CD4-positive, alpha-beta memory T cell (primary cell): ENCODE measurements at regions of chr1 and their contacts with region 1.

Region 1: DNA sequence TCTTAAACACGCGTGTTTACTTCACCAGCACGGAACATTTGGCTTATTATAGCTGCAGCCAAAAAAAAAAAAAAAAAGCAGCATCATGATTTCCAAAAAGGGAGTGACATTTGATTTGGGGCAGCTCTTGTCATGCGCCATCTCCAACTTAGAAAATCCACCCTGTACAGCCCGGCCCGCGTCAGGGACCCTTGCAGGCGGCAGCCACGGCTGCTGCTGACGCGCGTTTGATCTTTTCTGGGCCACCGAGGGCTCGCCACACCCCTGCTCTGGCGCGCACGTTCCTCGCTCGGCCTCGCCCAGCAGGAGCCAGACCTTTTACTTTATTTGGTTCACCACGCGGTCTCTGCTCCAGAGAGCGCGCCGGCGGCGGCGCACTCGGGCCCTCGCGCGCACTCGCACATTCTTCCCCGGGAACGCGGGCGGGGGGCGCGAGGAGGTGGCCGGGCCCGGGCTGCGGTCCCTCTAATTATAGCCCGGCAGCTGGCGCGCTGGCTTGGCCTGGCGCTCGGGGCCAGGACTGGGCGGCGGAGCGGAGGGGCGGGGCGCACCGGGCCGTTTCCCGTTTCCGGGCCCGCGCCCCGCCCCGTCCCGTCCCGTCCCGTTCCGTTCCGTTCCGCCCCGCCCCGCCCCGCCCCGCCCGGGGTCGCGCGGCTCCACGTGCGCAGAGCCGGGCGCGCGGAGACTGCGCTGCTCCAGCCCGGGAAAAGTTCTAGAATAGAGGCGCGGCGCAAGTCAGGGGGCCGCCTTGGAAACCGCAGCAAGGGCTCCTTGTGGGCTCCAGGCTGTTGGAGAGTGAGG is 10.2 kb downstream of the IRF2BP2 start:
- DNase-seq: peak; percentile 81 to 95 (median 84)
- H3K4me3 ChIP-seq: peak overlapping the region; percentile 17 to 46
- H3K4me3 Mint-ChIP-seq: peak overlapping the region; percentile 84 to 95 (median 88)
- H3K27ac ChIP-seq: peak overlapping the region; percentile 96
- H3K27ac Mint-ChIP-seq: peak overlapping the region; percentile 92 to 99 (median 97)
- H3K4me1 ChIP-seq: peaks cover 56% of the 10 kb centered on the region
- H3K4me1 Mint-ChIP-seq: peaks cover 37 to 64% (median 48%) of the 10 kb centered on the region in 4 donors
- H3K27me3 ChIP-seq: no peaks in the 10 kb centered on the region
- H3K27me3 Mint-ChIP-seq: no peaks in the 10 kb centered on the region

Region 2: GRCh38 chr1:234478481-234479309 is 121.1 kb before region 1 on chr1 and contains the start of gene TARBP1:
- CTCF ChIA-PET with region 1: no interaction called
- POLR2A ChIA-PET with region 1: interaction called, 9 read pairs
- intact Hi-C with region 1: loop called (anchors 2 kb)
- DNase-seq: peak; percentile 73 to 83 (median 82)
- H3K4me3 ChIP-seq: peak within 1 kb of the TSS; percentile 47 to 63
- H3K4me3 Mint-ChIP-seq: peak within 1 kb of the TSS; percentile 87 to 93 (median 90)
- H3K27ac ChIP-seq: peak within 1 kb of the TSS; percentile 42
- H3K27ac Mint-ChIP-seq: peak within 1 kb of the TSS; percentile 57 to 96 (median 89)
- H3K4me1 ChIP-seq: peaks cover 29% of the 10 kb centered on the region
- H3K4me1 Mint-ChIP-seq: peaks cover 15 to 44% (median 27%) of the 10 kb centered on the region in 4 donors
- H3K27me3 ChIP-seq: no peaks in the 10 kb centered on the region
- H3K27me3 Mint-ChIP-seq: peaks cover 5 to 9% of the 10 kb centered on the region in 2 donors
- total RNA-seq, gene TARBP1: 25.8 to 27.5 TPM

Region 3: GRCh38 chr1:234691567-234691966 is 91.8 kb after region 1 on chr1:
- CTCF ChIA-PET with region 1: interaction called, 4 read pairs
- POLR2A ChIA-PET with region 1: no interaction called
- intact Hi-C with region 1: loop called (anchors 1 kb)
- DNase-seq: peak in 4 of 5 donors; percentile 11 to 25 (median 14)
- H3K4me3 ChIP-seq: no peak overlapping the region
- H3K4me3 Mint-ChIP-seq: no peak overlapping the region
- H3K27ac ChIP-seq: no peak overlapping the region
- H3K27ac Mint-ChIP-seq: peak overlapping the region in 1 of 7 donors; percentile 68
- H3K4me1 ChIP-seq: no peaks in the 10 kb centered on the region
- H3K4me1 Mint-ChIP-seq: no peaks in the 10 kb centered on the region
- H3K27me3 ChIP-seq: no peaks in the 10 kb centered on the region
- H3K27me3 Mint-ChIP-seq: no peaks in the 10 kb centered on the region

Region 4: GRCh38 chr1:234772345-234773147 is 172.7 kb after region 1 on chr1:
- CTCF ChIA-PET with region 1: interaction called, 3 read pairs
- POLR2A ChIA-PET with region 1: interaction called, 21 read pairs
- intact Hi-C with region 1: no loop called
- DNase-seq: peak; percentile 81 to 96 (median 82)
- H3K4me3 ChIP-seq: no peak overlapping the region
- H3K4me3 Mint-ChIP-seq: peak overlapping the region; percentile 65 to 89 (median 84)
- H3K27ac ChIP-seq: peak overlapping the region; percentile 58
- H3K27ac Mint-ChIP-seq: peak overlapping the region; percentile 91 to 99 (median 98)
- H3K4me1 ChIP-seq: peaks cover 54% of the 10 kb centered on the region
- H3K4me1 Mint-ChIP-seq: peaks cover 42 to 56% (median 49%) of the 10 kb centered on the region in 4 donors
- H3K27me3 ChIP-seq: peaks cover 11% of the 10 kb centered on the region
- H3K27me3 Mint-ChIP-seq: no peaks in the 10 kb centered on the region

Region 5: DNA sequence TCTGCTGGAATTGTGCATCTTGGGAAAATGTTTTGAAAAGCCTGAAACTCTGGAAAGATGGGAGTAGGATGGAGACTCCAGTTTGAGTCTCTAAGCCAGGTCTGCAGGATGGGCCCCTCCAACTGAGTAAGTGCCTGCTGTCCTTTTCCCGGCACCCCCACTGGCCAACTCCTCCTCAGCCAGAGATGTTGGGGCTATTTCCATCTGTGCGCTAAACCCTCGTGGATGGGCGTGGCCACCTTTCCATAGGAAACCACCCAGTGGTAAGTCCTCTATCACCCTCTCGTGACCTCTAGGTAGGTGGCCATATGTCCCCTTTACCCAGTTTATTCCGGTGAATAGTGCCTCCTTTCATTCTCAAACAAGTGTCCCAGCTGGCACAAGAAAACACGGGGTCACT is 277.9 kb after region 1 on chr1:
- CTCF ChIA-PET with region 1: interaction called, 3 read pairs
- POLR2A ChIA-PET with region 1: no interaction called
- intact Hi-C with region 1: loop called (anchors 1 kb)
- DNase-seq: no peak
- H3K4me3 ChIP-seq: no peak overlapping the region
- H3K4me3 Mint-ChIP-seq: no peak overlapping the region
- H3K27ac ChIP-seq: no peak overlapping the region
- H3K27ac Mint-ChIP-seq: no peak overlapping the region
- H3K4me1 ChIP-seq: peaks cover 7% of the 10 kb centered on the region
- H3K4me1 Mint-ChIP-seq: peaks cover 9 to 14% (median 12%) of the 10 kb centered on the region in 4 donors
- H3K27me3 ChIP-seq: no peaks in the 10 kb centered on the region
- H3K27me3 Mint-ChIP-seq: no peaks in the 10 kb centered on the region

Region 6: DNA sequence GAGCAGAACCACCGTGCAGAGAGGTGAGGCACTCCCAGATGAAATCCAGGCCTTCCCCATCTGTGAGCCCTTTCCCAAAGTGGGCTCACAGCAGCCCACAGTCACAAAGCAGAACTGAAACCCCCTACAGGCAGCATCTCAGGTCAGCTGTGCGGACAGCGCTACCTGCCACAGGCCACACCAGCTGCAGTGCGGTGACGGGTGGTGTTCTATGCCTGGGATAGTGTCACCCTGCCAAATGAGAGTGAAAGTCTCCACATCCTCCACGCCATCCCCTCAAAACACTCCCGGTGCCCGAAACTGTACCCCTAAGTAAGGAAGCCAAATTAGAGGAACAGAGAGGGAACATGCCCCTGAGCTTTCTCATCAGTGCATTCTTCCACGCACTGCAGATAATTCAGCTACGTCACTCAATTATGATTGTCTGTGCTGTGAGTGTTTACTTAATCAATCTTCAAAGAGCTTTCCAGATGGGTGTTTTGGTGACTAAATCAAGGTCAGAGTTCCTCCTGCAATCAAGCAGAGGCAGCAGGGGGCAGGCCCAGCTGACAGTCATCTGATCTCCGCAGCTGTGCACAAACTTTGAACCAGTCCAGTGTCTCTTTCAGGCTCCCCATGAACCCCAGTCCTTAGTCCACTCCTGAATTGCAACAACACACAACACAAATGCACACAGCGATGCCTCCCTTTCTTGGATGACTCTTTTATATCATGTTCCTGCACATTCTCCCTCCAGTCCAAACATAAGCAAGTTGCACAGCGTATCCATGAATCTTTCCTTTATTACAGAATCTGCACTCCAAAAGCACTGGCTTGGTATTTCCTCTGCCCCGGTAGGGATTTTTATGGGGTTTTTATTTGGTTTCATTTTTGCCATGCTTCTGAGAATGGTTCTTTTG is 378.8 kb after region 1 on chr1:
- CTCF ChIA-PET with region 1: interaction called, 9 read pairs
- POLR2A ChIA-PET with region 1: interaction called, 104 read pairs
- intact Hi-C with region 1: no loop called
- DNase-seq: peak; percentile 72 to 87 (median 77)
- H3K4me3 ChIP-seq: peak overlapping the region in 1 of 2 donors; percentile 33
- H3K4me3 Mint-ChIP-seq: peak overlapping the region; percentile 43 to 93 (median 79)
- H3K27ac ChIP-seq: peak overlapping the region; percentile 88
- H3K27ac Mint-ChIP-seq: peak overlapping the region; percentile 96 to 99 (median 97)
- H3K4me1 ChIP-seq: peaks cover 65% of the 10 kb centered on the region
- H3K4me1 Mint-ChIP-seq: peaks cover 40 to 83% (median 53%) of the 10 kb centered on the region in 4 donors
- H3K27me3 ChIP-seq: no peaks in the 10 kb centered on the region
- H3K27me3 Mint-ChIP-seq: no peaks in the 10 kb centered on the region

Region 7: DNA sequence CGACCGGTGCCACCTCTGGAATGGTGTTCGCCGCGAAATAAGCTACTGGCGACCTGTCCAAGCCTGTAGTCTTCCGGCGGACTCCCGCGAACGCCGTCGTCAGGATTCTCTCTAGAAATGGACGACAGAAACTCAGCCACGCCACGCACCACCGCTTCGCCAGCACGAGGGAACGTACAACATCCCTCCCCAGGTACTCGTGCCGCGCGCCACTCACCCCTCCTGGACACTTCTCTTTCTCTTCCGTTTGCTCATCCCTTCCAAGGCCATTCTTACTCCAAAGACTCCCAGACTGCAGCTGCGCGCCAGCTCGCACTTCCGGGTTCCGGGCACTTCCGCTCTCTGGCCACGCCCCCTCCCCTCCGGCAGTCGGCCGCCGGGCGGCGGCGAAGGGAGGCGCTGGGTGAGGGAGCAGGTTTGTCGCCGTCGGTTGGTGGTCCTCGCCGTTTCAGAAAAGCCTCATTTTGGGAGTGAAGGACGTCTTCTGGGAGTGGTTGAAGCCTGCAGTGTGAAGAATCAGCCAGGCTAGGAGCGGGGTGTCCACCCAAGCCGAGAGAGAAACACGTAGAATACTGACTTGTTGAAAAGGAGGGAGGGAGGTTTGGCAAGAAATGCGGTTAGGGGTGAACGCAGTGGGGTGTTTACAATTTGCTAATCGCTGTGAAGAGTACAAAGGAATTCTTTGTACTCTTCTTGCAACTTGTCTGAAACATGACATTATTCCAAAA is 561.3 kb after region 1 on chr1 and contains the start of gene RBM34:
- CTCF ChIA-PET with region 1: no interaction called
- POLR2A ChIA-PET with region 1: interaction called, 4 read pairs
- intact Hi-C with region 1: loop called (anchors 5 kb)
- DNase-seq: peak; percentile 90 to 93 (median 91)
- H3K4me3 ChIP-seq: peak within 1 kb of the TSS; percentile 79 to 80
- H3K4me3 Mint-ChIP-seq: peak within 1 kb of the TSS; percentile 94 to 99 (median 98)
- H3K27ac ChIP-seq: peak within 1 kb of the TSS; percentile 92
- H3K27ac Mint-ChIP-seq: peak within 1 kb of the TSS; percentile 95 to 99 (median 98)
- H3K4me1 ChIP-seq: peaks cover 50% of the 10 kb centered on the region
- H3K4me1 Mint-ChIP-seq: peaks cover 15 to 30% (median 22%) of the 10 kb centered on the region in 4 donors
- H3K27me3 ChIP-seq: no peaks in the 10 kb centered on the region
- H3K27me3 Mint-ChIP-seq: no peaks in the 10 kb centered on the region
- total RNA-seq, gene RBM34: 120 TPM